ENCODE measurements at regions of chr2 and their contacts with region 1.

Region 1: DNA sequence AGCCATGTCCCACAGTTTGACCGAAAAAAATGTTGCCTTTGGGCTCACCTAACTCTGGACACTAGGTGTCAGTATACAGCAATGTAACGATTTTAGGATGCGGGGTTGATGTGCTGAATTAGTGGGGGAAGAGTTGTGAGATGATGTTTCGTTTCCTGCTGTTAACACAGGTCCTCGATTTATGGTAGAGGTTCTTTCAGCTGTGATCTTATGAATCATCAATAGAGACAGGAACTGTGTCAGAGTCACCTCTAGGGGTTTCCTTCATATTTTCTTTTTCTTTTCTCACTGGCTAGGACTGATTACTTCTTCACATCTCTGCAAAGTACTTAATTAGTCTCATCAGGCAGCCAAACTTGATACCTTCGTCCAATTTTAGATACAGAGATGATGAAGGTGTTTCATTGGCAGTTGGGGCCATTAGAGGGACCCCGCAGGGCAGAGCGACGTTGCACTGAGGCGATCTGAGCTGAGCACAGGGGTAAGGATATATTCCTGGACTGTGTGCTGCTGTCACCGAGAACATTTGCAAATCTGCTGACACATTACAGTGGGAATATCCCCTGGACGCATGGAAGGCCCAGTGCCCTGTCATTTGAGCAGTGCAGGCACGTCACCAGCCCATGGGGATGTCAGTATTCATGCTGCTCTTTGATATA is 10.2 kb upstream of the MMADHC start:
- DNase-seq: peak; percentile 69
- ATAC-seq: peak; percentile 93
- H3K4me3 Mint-ChIP-seq: no peak overlapping the region
- H3K27ac Mint-ChIP-seq: peak overlapping the region; percentile 36
- H3K4me1 Mint-ChIP-seq: peaks cover 24% of the 10 kb centered on the region
- H3K27me3 Mint-ChIP-seq: peaks cover 12% of the 10 kb centered on the region

Region 2: DNA sequence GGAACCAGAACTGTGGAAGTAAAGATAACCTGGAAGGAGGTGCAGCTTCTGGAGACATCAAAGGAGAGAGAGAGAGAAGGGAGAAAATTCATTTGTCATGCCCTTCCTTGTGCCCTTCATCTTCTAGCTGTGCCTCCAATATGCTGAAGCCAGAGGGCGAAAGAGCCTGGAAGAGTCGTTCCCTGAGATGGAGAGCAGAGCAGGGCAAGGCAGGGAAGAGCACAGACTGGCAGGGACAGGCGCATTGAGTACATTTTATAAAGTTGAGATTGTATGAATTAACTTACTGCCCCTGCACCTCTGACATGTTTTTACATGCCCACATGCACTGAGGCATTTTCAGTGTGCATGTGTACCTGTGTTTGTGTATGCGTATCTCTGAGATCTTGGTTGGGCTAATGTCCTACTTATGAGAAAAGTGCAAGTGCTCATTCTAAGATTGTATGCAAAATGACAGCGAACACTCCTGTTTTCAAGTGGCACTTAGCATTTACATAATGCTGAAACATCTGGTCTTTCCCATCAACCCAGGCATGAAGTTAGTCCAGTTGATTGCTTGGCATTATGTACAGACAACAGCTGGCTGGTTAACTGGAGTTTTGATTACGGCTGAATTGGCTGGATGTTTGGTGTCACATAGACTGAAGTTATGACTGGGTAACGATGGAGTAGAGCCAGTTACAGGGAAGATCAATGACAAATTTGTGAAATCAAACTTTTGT is 13.5 kb after region 1 on chr2:
- CTCF ChIA-PET with region 1: interaction called, 10 read pairs
- POLR2A ChIA-PET with region 1: no interaction called
- DNase-seq: no peak
- ATAC-seq: no peak
- H3K4me3 Mint-ChIP-seq: no peak overlapping the region
- H3K27ac Mint-ChIP-seq: no peak overlapping the region
- H3K4me1 Mint-ChIP-seq: no peaks in the 10 kb centered on the region
- H3K27me3 Mint-ChIP-seq: peaks cover 7% of the 10 kb centered on the region

Region 3: GRCh38 chr2:151051574-151052220 is 1453.9 kb after region 1 on chr2:
- CTCF ChIA-PET with region 1: interaction called, 16 read pairs
- POLR2A ChIA-PET with region 1: no interaction called
- DNase-seq: peak; percentile 34
- ATAC-seq: no peak
- H3K4me3 Mint-ChIP-seq: no peak overlapping the region
- H3K27ac Mint-ChIP-seq: no peak overlapping the region
- H3K4me1 Mint-ChIP-seq: no peaks in the 10 kb centered on the region
- H3K27me3 Mint-ChIP-seq: peaks cover 2% of the 10 kb centered on the region

Region 4: DNA sequence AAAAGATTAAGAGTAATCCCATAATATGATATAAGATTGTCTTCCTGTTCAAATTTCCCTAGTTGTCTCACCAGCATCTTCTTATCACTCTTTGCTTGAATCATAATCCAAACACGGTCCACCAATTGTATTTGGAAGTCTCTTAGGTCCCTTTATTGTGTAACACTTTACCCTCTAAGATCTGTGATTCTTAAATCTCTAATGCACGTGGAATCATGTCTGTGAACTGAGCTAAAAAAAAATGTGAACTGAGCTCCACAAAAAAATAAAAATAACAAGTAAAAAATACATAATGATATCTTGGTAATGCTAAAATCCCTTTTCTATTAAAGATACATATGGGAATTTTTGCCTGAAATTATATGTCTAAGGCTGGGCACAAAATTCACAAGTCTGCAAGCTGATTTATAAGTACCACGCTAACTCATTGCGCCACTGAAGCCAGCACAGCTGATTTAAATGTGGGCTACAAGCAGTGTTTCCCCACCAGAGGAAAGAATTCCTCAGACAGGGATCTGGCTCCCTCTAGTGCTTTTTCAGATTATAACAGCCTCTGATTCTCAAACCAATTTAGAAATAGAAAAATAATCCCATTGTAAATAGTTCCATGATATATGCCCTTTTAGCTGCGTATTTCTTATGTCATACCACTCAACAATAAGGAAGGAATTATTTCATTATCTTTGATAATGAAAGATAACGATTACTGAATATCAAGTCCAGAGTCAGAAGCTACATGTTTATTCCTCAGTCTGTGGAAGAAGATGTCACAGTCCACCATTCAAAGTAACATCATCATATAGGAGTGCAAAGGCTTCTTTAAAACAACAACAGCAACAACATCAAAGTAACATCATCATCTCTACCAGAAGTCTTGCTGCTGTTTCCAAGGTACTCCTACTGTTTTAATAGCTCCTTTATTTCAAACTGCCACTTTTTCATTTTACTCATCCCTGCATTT is 1641.0 kb after region 1 on chr2:
- CTCF ChIA-PET with region 1: interaction called, 28 read pairs
- POLR2A ChIA-PET with region 1: no interaction called
- DNase-seq: peak; percentile 49
- ATAC-seq: peak; percentile 63
- H3K4me3 Mint-ChIP-seq: no peak overlapping the region
- H3K27ac Mint-ChIP-seq: no peak overlapping the region
- H3K4me1 Mint-ChIP-seq: no peaks in the 10 kb centered on the region
- H3K27me3 Mint-ChIP-seq: peaks cover 6% of the 10 kb centered on the region

Measured in activated CD8-positive, alpha-beta T cell treated with anti-CD3 and anti-CD28 coated beads, Interleukin-2, amount 10 ng/mL, durations not matched to agents 7 days and 5 days (primary cell).